Cardiac septum (tissue), 1 donor: ENCODE measurements at regions of chr11 and their contacts with region 1.

Region 1: GRCh38 chr11:74592441-74593362 is at the start of gene POLD3:
- DNase-seq: peak; percentile 98
- total RNA-seq, gene POLD3: 6.9 TPM

Region 2: DNA sequence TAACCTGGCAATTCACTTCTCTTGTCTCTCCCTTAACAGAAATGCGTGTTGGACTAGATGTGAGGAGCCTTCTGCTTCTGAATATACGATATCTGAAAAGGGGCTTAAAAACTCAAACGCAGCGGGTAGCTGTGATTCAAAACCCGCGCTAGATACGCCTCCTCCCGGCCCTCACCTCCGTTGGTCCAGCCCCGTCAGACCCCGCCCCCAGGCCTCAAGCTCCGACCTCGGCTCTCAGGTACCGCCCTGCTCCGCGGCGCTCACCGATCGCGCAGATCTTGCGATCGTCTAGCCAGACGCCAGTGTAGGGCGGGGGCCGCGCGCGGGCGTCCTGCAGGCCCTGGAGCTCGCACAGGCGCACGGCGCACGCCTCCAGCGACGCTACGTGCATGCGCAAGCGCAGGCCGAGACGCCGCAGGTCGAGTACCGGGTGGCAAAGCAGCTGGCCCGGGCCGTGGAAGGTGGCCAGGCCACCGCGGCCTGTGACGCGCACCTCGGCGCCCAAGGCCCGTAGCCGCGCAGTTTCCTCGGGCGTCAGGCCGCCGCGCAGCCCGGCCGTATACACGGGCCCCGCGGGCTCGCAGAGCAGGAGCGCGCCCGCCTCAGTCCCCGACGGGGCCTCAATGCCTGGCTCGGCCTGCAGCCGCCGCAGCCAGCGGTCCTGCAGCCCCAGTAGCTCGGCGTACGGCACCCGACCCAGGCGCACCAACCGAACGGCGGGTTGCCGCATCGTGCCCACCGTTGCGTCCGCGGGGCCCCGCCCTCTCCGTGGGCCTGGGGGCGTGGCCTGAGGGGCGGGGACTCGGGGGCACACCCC is 99.5 kb before region 1 on chr11 and contains the start of gene LIPT2:
- intact Hi-C with region 1: loop called (anchors 2 kb)
- DNase-seq: peak; percentile 98
- total RNA-seq, gene LIPT2: 1.8 TPM

Region 3: DNA sequence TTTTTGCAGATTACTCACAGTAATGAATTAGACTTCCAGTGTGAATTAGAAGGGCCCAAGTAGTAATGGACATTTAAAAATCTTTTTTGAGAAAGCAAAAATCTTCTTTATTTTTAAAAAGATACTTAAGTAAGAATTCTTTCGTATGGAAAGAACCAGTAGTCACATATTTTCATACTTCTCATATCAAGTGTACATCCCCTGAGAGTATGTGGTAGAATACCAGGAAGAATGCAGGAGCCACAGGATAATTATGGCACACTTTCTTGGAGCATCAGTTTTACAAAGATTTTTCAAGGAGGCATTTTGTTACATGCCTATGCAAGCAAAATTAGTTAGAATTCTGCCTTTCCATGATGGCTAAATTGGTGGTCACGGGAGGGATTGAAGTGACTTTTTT is 27.8 kb after region 1 on chr11:
- intact Hi-C with region 1: no loop called
- DNase-seq: no peak

Region 4: DNA sequence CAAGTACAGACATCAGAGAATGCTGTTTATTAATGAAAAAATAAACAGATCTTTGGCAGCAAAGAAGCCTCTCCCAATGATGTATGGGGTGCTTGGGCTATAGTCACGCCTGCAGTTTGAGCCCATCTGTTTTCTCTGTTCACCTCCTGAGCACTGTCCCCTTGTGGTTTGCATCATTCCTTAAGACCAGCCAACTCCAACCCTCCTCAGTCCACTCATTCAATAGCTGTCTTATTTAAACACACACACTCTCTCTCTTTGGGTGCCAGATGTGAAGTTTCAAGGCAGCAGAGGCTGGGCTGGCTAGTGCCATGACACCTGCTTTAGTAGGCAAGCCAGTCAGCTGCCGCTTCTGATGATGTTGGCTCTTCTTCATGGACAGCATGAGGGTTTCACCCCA is 57.8 kb after region 1 on chr11:
- intact Hi-C with region 1: no loop called
- DNase-seq: no peak